ENCODE measurements at regions of chr4 and their contacts with region 1.

Region 1: GRCh38 chr4:38523524-38524448 is 140.2 kb upstream of the KLF3 start:
- DNase-seq: peak; percentile 54
- H3K4me3 Mint-ChIP-seq: no peak overlapping the region
- H3K27ac Mint-ChIP-seq: peak overlapping the region; percentile 57
- H3K4me1 Mint-ChIP-seq: peaks cover 11% of the 10 kb centered on the region
- H3K27me3 Mint-ChIP-seq: peaks cover 25% of the 10 kb centered on the region

Region 2: DNA sequence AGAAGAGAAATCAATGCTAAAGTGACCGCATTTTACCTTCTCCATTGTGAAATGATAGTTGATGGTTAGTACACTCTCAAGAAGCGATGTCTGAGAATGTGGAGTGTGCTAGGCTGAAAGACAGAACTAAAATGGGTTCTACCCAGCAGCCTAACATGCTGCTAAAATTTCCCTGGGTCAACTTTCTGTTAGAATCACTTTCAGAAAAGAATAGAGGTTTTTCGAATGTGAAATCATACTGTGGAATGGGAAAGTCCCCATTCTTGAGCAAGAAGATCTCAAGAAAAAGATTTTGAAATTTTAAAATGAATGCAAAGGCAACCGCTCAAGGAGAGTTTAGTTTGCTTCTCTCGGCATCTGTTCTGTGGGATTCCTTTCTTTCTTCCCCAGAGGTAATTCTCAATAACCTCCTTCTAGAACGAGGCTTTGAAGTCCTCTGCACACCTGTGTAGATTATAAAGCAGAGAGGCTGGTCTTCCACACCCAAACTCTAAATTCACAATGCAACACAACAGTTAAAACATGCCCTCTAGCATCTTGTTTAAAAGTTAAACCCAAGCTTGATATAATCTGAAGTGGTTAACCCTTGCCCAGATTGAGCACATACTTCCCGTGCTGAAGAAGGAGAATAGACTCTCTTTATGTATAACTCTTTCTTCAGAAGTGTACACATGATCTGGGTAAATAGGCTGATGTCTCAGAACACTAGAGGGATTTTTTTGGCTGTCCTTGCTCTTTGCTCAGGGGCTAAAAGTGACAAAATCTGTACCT is 68.5 kb before region 1 on chr4:
- intact Hi-C with region 1: loop called (anchors 1 kb)
- DNase-seq: no peak
- H3K4me3 Mint-ChIP-seq: no peak overlapping the region
- H3K27ac Mint-ChIP-seq: peak overlapping the region; percentile 74
- H3K4me1 Mint-ChIP-seq: peaks cover 45% of the 10 kb centered on the region
- H3K27me3 Mint-ChIP-seq: peaks cover 12% of the 10 kb centered on the region

Region 3: DNA sequence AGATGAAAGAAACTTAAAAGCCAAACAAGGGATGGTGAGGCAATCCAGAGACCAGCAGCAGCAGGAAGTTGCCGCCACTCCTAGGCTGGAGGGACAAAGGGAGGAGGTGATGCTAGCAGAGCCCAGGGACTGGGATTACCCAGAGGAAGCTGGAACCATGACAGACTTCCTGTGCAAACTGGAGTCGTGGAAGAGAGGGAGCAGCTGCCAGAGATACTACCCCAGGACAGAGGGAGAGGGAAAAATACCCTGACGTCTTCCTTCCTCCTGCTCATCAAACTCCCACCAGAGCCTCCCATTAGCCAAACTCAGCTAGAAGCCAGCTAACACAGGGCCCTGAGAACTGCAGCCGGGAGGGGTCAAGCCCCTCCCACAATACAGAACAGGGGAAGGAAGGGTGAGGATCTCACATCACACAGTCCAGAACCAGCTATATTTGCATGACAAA is 39.0 kb after region 1 on chr4:
- intact Hi-C with region 1: loop called (anchors 5 kb)
- DNase-seq: no peak
- H3K4me3 Mint-ChIP-seq: no peak overlapping the region
- H3K27ac Mint-ChIP-seq: no peak overlapping the region
- H3K4me1 Mint-ChIP-seq: peaks cover 14% of the 10 kb centered on the region
- H3K27me3 Mint-ChIP-seq: peaks cover 50% of the 10 kb centered on the region

Region 4: DNA sequence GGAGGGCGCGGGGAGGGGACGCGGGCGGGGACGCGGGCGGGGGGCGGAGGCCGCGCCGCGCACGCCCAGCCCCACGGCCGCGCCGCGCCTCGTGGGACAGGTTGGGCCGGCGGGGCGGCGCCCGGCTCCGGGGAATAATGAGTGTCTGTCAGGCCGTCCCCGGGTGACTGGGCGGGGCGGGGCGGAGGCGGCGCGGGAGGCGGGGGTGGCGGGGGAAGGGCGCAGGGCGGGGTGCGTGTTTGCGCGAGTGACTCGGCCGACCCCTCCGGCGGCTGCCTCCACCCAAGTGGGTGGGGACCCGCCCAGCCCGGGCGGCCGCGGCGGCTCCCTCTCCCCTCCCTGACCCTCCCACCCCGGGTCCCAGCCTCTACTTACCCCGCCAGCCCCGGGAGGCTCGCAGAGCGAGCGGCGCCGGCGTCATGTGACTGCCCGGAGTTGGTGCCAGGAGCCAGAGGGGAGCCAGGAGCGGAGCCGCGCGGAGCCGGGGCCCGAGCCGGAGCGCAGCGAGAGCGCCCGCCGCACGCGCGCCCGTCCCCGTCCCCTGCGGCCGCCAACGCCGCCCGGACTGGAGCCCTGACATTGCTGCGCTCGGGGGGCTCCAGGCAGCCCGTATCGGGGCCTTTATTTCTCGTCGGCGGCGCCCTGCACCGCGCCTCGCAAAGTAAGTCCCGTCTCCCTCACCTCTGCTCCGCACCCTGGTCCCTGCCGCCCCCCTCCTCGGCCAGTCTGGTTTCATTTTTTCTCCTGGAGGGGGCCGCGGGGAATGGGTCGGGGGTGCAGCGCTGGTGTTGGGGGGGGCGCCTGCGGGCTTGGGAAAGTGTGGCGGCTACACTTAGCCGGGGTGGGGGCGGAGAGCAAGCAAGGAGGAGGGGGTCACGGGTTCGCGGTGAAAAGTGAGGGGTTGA is 140.3 kb after region 1 on chr4 and contains the start of gene KLF3:
- intact Hi-C with region 1: loop called (anchors 1 kb)
- DNase-seq: peak; percentile 78
- H3K4me3 Mint-ChIP-seq: peak within 1 kb of the TSS; percentile 75
- H3K27ac Mint-ChIP-seq: no peak within 1 kb of the TSS
- H3K4me1 Mint-ChIP-seq: peaks cover 23% of the 10 kb centered on the region
- H3K27me3 Mint-ChIP-seq: peaks cover 65% of the 10 kb centered on the region
- total RNA-seq, gene KLF3: 0.62 and 0.71 TPM in 2 replicates

Measured in activated T-helper 2 cell treated with anti-CD3 and anti-CD28 coated beads, Interferon-gamma antibody, Interleukin-2, Interleukin-4, amounts not matched to agents 10 μg/mL and 5 μg/mL and 100 μg/mL, durations not matched to agents 14 hours and 24 hours and 36 hours (primary cell).